ENCODE measurements at regions of chr7 and their contacts with region 1.

Region 1: GRCh38 chr7:102286237-102287110 is at the start of gene SH2B2:
- DNase-seq: peak in 1 of 2 experiments; percentile 79
- H3K4me3 ChIP-seq: peak within 1 kb of the TSS; percentile 71 to 97 (median 82)
- H3K27ac ChIP-seq: no peak within 1 kb of the TSS; the same call in 1 of the 2 replicates
- H3K4me1 ChIP-seq: peaks cover 2 to 14% (median 8%) of the 10 kb centered on the region in 4 experiments; a peak in 6 of 7 replicates
- H3K27me3 ChIP-seq: peaks cover 0 to 4% (median 3%) of the 10 kb centered on the region in 4 experiments; a peak in 3 of 7 replicates
- CTCF ChIP-seq: no peak
- EP300 ChIP-seq: no peak
- POLR2A ChIP-seq: peak in 1 of 2 experiments; percentile 23; a peak in 1 of 3 replicates
- RAD21 ChIP-seq: no peak
- total RNA-seq, gene SH2B2: 17.5 and 18.7 TPM in 2 replicates

Region 2: GRCh38 chr7:102097584-102098161 is 188.8 kb before region 1 on chr7:
- CTCF ChIA-PET with region 1: no interaction called
- POLR2A ChIA-PET with region 1: no interaction called
- DNase-seq: peak in 1 of 2 experiments; percentile 42
- H3K4me3 ChIP-seq: no peak overlapping the region
- H3K27ac ChIP-seq: no peak overlapping the region
- H3K4me1 ChIP-seq: peaks cover 0 to 8% (median 3%) of the 10 kb centered on the region in 4 experiments; a peak in 5 of 7 replicates
- H3K27me3 ChIP-seq: no peaks in the 10 kb centered on the region
- CTCF ChIP-seq: no peak
- EP300 ChIP-seq: no peak
- POLR2A ChIP-seq: no peak
- RAD21 ChIP-seq: no peak

Region 3: DNA sequence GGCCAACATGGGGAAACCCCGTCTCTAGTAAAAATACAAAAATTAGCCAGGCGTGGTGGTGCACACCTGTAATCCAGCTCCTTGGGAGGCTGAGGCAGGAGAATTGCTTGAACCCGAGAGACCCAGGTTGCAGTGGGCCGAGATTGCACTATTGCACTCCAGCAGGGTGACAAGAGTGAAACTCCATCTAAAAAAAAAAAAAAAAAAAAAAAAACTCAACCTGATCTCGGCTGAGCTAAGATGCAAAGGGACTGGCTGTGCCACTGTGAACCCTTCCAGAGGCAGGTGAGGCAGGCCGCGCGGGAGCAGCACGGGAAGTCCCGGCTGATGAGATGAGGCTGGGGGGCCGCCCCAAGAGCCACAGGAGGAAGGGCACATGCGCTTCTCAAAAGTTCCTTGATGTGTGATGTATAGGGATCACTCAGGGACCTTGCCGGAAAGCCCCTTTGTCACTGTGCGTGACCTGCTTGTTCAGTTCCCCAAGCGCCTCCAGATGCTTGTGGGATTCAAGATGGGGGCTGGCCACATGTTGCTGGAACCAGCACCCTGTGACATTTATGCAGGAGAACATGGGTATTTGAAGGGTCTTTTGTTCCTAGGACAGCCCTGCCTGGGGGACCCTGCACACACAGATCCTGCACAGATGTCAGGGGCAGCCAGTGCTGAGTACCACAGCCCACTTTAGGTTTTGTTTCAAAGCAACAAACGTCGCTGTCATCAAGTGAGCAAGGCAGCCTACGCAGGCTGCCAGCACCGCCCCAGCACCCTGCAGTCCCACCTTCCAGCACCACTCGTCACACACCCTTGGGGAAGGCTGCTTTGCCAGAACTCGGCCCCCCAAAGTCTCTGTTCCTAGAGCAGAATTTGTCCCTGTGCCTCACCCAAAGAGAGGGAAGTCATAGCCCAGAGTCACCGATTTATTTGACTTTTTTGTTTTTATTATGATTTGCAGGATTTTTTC is 74.6 kb before region 1 on chr7:
- CTCF ChIA-PET with region 1: no interaction called
- POLR2A ChIA-PET with region 1: no interaction called
- DNase-seq: no peak
- H3K4me3 ChIP-seq: no peak overlapping the region
- H3K27ac ChIP-seq: no peak overlapping the region
- H3K4me1 ChIP-seq: no peaks in the 10 kb centered on the region; a peak in 1 of 7 replicates
- H3K27me3 ChIP-seq: no peaks in the 10 kb centered on the region
- CTCF ChIP-seq: no peak
- EP300 ChIP-seq: no peak
- POLR2A ChIP-seq: no peak
- RAD21 ChIP-seq: no peak

Region 4: GRCh38 chr7:102300643-102301233 is 14.3 kb after region 1 on chr7:
- CTCF ChIA-PET with region 1: interaction called, 29 read pairs
- POLR2A ChIA-PET with region 1: interaction called, 5 read pairs
- DNase-seq: peak; percentile 38 to 94
- H3K4me3 ChIP-seq: peak overlapping the region in 1 of 4 experiments; percentile 25; a peak in 1 of 8 replicates
- H3K27ac ChIP-seq: no peak overlapping the region
- H3K4me1 ChIP-seq: peaks cover 0 to 9% (median 2%) of the 10 kb centered on the region in 4 experiments; a peak in 3 of 7 replicates
- H3K27me3 ChIP-seq: peaks cover 0 to 7% (median 3%) of the 10 kb centered on the region in 4 experiments; a peak in 4 of 7 replicates
- CTCF ChIP-seq: peak in 2 of 3 experiments; percentile 86 to 92; a peak in 3 of 4 replicates
- EP300 ChIP-seq: no peak
- POLR2A ChIP-seq: no peak
- RAD21 ChIP-seq: peak; percentile 64 to 82

Region 5: DNA sequence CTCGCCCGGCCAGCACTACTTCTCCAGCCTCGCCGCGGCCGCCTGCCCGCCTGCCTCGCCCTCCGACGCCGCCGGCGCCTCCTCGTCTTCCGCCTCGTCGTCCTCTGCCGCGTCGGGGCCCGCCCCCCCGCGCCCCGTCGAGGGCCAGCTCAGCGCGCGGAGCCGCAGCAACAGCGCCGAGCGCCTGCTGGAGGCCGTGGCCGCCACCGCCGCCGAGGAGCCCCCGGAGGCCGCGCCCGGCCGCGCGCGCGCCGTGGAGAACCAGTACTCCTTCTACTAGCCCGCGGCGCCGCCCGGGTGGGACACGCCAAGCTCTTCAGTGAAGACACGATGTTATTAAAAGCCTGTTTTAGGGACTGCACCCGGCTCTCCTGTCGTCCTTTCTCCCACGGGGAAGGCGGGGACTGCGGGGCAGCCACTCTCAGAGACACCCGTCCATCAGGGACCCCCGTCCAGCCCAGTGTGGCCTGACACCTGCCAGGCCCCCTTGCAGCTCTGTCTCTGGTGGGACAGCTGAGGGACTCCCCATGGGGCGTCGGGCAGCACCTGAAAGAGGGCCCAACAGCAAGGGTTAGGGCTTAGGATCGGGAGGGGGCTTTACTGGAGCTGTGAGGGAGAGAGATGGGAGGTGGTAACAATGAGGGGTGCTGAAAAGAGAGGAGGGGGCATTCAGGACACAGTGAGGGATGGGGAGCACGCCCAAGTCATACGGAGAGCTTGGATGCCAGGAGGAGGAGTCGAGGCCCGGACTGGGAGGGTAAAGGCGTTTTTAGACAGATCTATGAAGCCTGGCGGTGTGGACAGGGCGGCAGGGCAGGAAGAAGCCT is 35.1 kb after region 1 on chr7:
- CTCF ChIA-PET with region 1: interaction called, 14 read pairs
- POLR2A ChIA-PET with region 1: interaction called, 3 read pairs
- DNase-seq: peak in 1 of 2 experiments; percentile 74
- H3K4me3 ChIP-seq: peak overlapping the region in 3 of 4 experiments; percentile 12 to 44 (median 23); a peak in 6 of 8 replicates
- H3K27ac ChIP-seq: no peak overlapping the region
- H3K4me1 ChIP-seq: peaks cover 4 to 12% (median 8%) of the 10 kb centered on the region in 4 experiments; a peak in 6 of 7 replicates
- H3K27me3 ChIP-seq: peaks cover 0 to 2% (median 0%) of the 10 kb centered on the region in 4 experiments; a peak in 3 of 7 replicates
- CTCF ChIP-seq: peak; percentile 13 to 43 (median 21)
- EP300 ChIP-seq: no peak
- POLR2A ChIP-seq: no peak
- RAD21 ChIP-seq: peak in 1 of 2 experiments; percentile 38; a peak in 2 of 4 replicates

Region 6: DNA sequence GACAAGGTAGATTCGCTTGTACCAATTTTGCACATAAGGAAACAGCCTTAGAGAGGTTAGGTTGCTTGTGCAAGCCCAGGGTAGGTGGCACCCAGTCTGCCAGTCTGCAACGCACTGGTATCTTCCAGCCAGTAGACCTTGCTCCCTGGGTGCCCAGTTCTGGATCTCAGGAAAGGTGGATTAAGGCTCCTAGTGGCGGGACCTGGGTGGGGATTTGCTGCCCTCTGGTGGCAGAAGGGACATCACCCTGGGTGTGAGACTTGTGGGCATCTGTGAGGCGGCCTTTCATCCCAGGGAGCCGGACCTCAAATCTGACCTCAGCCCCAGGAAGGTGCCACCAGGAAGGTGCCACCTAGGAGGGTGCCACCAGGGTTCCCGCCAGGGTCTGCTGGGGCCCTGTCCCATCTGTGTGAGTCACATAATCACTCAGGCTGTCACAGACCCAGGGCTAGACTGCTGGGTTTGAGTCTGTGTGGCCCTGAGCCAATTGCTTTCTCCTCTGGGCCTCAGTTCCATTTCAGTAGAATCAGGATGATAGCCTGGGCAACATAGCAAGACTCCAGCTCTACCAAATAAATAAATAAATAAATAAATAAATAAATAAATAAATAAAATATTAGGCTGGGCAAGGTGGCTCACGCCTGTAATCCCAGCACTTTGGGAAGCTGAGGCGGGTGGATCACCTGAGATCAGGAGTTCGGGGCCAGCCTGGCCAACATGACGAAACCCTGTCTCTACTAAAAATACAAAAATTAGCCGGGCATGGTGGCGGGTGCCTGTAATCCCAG is 104.4 kb after region 1 on chr7:
- CTCF ChIA-PET with region 1: interaction called, 118 read pairs
- POLR2A ChIA-PET with region 1: interaction called, 12 read pairs
- DNase-seq: peak; percentile 57 to 93
- H3K4me3 ChIP-seq: no peak overlapping the region
- H3K27ac ChIP-seq: no peak overlapping the region
- H3K4me1 ChIP-seq: peaks cover 0 to 3% (median 0%) of the 10 kb centered on the region in 4 experiments; a peak in 1 of 7 replicates
- H3K27me3 ChIP-seq: no peaks in the 10 kb centered on the region
- CTCF ChIP-seq: peak; percentile 94 to 98 (median 94)
- EP300 ChIP-seq: no peak
- POLR2A ChIP-seq: no peak
- RAD21 ChIP-seq: peak; percentile 95

Region 7: GRCh38 chr7:102396027-102397019 is 109.8 kb after region 1 on chr7 and contains the start of gene PRKRIP1:
- CTCF ChIA-PET with region 1: interaction called, 118 read pairs
- POLR2A ChIA-PET with region 1: interaction called, 12 read pairs
- DNase-seq: peak; percentile 90 to 93
- H3K4me3 ChIP-seq: peak within 1 kb of the TSS; percentile 69 to 94 (median 88)
- H3K27ac ChIP-seq: peak within 1 kb of the TSS; percentile 93
- H3K4me1 ChIP-seq: peaks cover 0 to 6% (median 2%) of the 10 kb centered on the region in 4 experiments; a peak in 2 of 7 replicates
- H3K27me3 ChIP-seq: no peaks in the 10 kb centered on the region
- CTCF ChIP-seq: no peak
- EP300 ChIP-seq: peak in 1 of 2 experiments; percentile 35; a peak in 1 of 3 replicates
- POLR2A ChIP-seq: peak; percentile 39 to 98
- RAD21 ChIP-seq: no peak
- total RNA-seq, gene PRKRIP1: 22.0 and 25.0 TPM in 2 replicates

Measured in H1 (cell line).